ENCODE measurements at regions of chr13 and their contacts with region 1.

Region 1: GRCh38 chr13:40666045-40666904 is at the start of gene FOXO1:
- DNase-seq: peak; percentile 58 to 89
- H3K4me3 ChIP-seq: peak within 1 kb of the TSS; percentile 90
- H3K27ac ChIP-seq: peak within 1 kb of the TSS; percentile 44; the same call in 1 of the 2 replicates
- H3K4me1 ChIP-seq: peaks cover 23% of the 10 kb centered on the region
- H3K27me3 ChIP-seq: no peaks in the 10 kb centered on the region
- CTCF ChIP-seq: no peak
- total RNA-seq, gene FOXO1: 9.0 and 10.5 TPM in 2 replicates

Region 2: GRCh38 chr13:40271931-40272775 is 394.1 kb before region 1 on chr13:
- CTCF ChIA-PET with region 1: no interaction called
- POLR2A ChIA-PET with region 1: no interaction called
- intact Hi-C with region 1: loop called (anchors 5 kb)
- DNase-seq: peak; percentile 74 to 82
- H3K4me3 ChIP-seq: no peak overlapping the region
- H3K27ac ChIP-seq: peak overlapping the region; percentile 57
- H3K4me1 ChIP-seq: peaks cover 27% of the 10 kb centered on the region
- H3K27me3 ChIP-seq: no peaks in the 10 kb centered on the region
- CTCF ChIP-seq: no peak

Region 3: GRCh38 chr13:40445557-40445990 is 220.7 kb before region 1 on chr13:
- CTCF ChIA-PET with region 1: no interaction called
- POLR2A ChIA-PET with region 1: no interaction called
- intact Hi-C with region 1: loop called (anchors 2 kb)
- DNase-seq: peak in 1 of 2 experiments; percentile 67
- H3K4me3 ChIP-seq: no peak overlapping the region
- H3K27ac ChIP-seq: no peak overlapping the region
- H3K4me1 ChIP-seq: peaks cover 11% of the 10 kb centered on the region
- H3K27me3 ChIP-seq: no peaks in the 10 kb centered on the region
- CTCF ChIP-seq: no peak

Region 4: DNA sequence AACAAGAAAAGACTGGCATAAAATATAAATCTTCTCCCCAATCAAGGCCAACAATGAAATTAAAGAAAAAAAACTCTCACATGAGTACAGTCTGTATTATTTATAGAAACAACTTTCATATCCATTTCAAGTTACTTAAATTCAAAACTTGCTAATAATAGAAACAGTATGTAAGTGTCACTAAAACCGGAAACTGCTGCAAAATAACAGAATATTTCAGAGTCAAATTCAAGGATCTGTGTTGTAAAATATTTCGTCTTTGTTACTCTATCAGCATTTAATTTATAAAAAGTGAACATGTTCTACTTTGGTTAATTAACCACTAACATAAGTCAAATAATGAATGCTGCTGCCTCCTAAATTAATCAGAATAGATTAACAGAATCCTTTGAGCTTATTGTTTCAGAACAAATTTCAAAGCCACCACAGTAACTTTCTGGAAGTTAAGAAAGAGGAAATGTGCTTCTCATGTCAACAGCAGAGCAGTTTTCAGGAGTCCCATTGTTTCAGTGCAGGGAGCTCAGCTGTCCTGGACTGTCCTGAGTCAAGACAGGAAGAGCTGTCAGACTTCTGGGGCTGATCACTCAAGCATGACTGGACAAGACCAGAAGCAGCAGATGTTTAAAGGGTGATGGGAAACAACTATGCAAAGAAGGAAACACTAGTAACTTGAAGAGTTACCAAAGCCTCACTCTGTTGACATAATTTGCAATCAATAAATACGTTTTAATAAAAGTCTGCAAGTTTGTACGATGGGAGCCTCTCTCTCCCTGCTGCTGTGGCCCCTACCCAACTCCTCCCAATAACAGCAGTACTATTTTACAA is 76.8 kb before region 1 on chr13:
- CTCF ChIA-PET with region 1: no interaction called
- POLR2A ChIA-PET with region 1: no interaction called
- intact Hi-C with region 1: loop called (anchors 10 kb)
- DNase-seq: no peak
- H3K4me3 ChIP-seq: no peak overlapping the region
- H3K27ac ChIP-seq: no peak overlapping the region
- H3K4me1 ChIP-seq: peaks cover 9% of the 10 kb centered on the region
- H3K27me3 ChIP-seq: no peaks in the 10 kb centered on the region
- CTCF ChIP-seq: no peak

Measured in PC-9 (cell line).